IMR-90 (cell line): ENCODE measurements at regions of chr3 and their contacts with region 1.

Region 1: DNA sequence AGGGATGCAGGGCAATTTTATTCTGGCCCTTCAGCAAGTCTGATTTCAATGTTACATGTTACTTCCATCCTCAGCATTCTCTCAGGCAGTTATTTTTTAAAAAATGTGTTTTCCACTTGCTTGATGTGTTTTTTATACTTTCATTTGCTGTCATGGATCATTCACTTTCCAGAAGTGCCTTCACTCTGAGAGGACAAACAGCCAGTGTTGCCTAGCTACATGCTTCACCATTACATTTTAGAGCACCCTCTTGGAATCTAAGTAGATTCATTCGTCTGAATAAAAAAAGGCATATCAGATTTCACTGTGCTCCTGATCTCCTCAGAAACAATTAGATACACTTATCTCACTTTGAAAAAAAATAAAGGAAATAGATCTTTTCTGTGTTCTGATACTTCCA is 93.6 kb upstream of the POU1F1 start:
- DNase-seq: no peak
- ATAC-seq: no peak
- H3K4me3 ChIP-seq: no peak overlapping the region
- H3K27ac ChIP-seq: no peak overlapping the region
- H3K4me1 ChIP-seq: no peaks in the 10 kb centered on the region
- H3K27me3 ChIP-seq: no peaks in the 10 kb centered on the region
- CTCF ChIP-seq: no peak
- POLR2A ChIP-seq: no peak
- RAD21 ChIP-seq: no peak

Region 2: GRCh38 chr3:86990734-86991481 is 379.1 kb before region 1 on chr3 and contains the start of gene VGLL3:
- CTCF ChIA-PET with region 1: no interaction called
- POLR2A ChIA-PET with region 1: no interaction called
- dilution Hi-C with region 1: no loop called
- in situ Hi-C with region 1: no loop called
- intact Hi-C with region 1: no loop called
- DNase-seq: peak; percentile 87
- ATAC-seq: peak; percentile 85
- H3K4me3 ChIP-seq: peak within 1 kb of the TSS; percentile 99
- H3K27ac ChIP-seq: peak within 1 kb of the TSS; percentile 97
- H3K4me1 ChIP-seq: peaks cover 6% of the 10 kb centered on the region
- H3K27me3 ChIP-seq: no peaks in the 10 kb centered on the region
- CTCF ChIP-seq: peak; percentile 25
- POLR2A ChIP-seq: peak; percentile 92
- RAD21 ChIP-seq: no peak
- total RNA-seq, gene VGLL3: 96.7 and 97.3 TPM in 2 replicates

Region 3: GRCh38 chr3:87272718-87273341 is 97.2 kb before region 1 on chr3:
- CTCF ChIA-PET with region 1: no interaction called
- POLR2A ChIA-PET with region 1: no interaction called
- dilution Hi-C with region 1: no loop called
- in situ Hi-C with region 1: no loop called
- intact Hi-C with region 1: no loop called
- DNase-seq: no peak
- ATAC-seq: no peak
- H3K4me3 ChIP-seq: no peak overlapping the region
- H3K27ac ChIP-seq: no peak overlapping the region
- H3K4me1 ChIP-seq: no peaks in the 10 kb centered on the region
- H3K27me3 ChIP-seq: no peaks in the 10 kb centered on the region
- CTCF ChIP-seq: no peak
- POLR2A ChIP-seq: no peak
- RAD21 ChIP-seq: no peak

Region 4: GRCh38 chr3:87329065-87329464 is 40.9 kb before region 1 on chr3:
- CTCF ChIA-PET with region 1: no interaction called
- POLR2A ChIA-PET with region 1: no interaction called
- dilution Hi-C with region 1: no loop called
- in situ Hi-C with region 1: no loop called
- intact Hi-C with region 1: loop called (anchors 2 kb)
- DNase-seq: no peak
- ATAC-seq: no peak
- H3K4me3 ChIP-seq: no peak overlapping the region
- H3K27ac ChIP-seq: no peak overlapping the region
- H3K4me1 ChIP-seq: no peaks in the 10 kb centered on the region
- H3K27me3 ChIP-seq: no peaks in the 10 kb centered on the region
- CTCF ChIP-seq: no peak
- POLR2A ChIP-seq: no peak
- RAD21 ChIP-seq: no peak

Region 5: GRCh38 chr3:87792534-87793336 is 422.7 kb after region 1 on chr3:
- CTCF ChIA-PET with region 1: no interaction called
- POLR2A ChIA-PET with region 1: interaction called, 12 read pairs
- dilution Hi-C with region 1: no loop called
- in situ Hi-C with region 1: no loop called
- intact Hi-C with region 1: no loop called
- DNase-seq: no peak
- ATAC-seq: no peak
- H3K4me3 ChIP-seq: no peak within 1 kb of the TSS
- H3K27ac ChIP-seq: no peak within 1 kb of the TSS
- H3K4me1 ChIP-seq: no peaks in the 10 kb centered on the region
- H3K27me3 ChIP-seq: no peaks in the 10 kb centered on the region
- CTCF ChIP-seq: no peak
- POLR2A ChIP-seq: no peak
- RAD21 ChIP-seq: no peak